Activated naive CD4-positive, alpha-beta T cell treated with anti-CD3 and anti-CD28 coated beads for 36 hours (primary cell): ENCODE measurements at regions of chr12 and their contacts with region 1.

Region 1: GRCh38 chr12:110600254-110600653 is 13.7 kb upstream of the TCTN1 start:
- DNase-seq: no peak
- H3K4me3 Mint-ChIP-seq: no peak overlapping the region
- H3K27ac Mint-ChIP-seq: no peak overlapping the region
- H3K4me1 Mint-ChIP-seq: peaks cover 6% of the 10 kb centered on the region
- H3K27me3 Mint-ChIP-seq: no peaks in the 10 kb centered on the region

Region 2: DNA sequence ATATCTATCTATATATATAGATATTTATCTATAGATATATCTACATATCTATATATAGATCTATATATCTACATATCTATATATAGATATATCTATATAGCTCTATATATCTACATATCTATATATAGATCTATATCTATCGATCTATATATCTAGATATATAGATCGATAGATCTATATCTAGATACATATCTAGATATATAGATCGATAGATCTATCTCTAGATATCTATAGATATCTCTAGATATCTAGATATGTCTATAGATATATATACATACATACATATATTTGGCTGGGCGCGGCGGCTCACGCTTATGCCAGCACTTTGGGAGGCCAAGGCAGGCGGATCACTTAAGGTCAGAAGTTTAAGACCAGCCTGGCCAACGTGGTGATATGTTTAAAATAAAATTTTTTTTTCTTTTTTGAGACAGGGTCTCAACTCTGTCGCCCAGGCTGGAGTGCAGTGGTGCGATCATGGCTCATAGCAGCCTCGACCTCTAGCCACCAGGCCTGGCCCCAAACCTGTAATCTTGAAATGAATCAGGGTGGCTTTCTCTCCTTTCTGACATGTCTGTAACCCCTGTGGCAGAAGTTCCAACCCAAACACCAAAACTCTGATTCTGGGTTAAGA is 168.2 kb before region 1 on chr12:
- CTCF ChIA-PET with region 1: interaction called, 16 read pairs
- intact Hi-C with region 1: no loop called
- DNase-seq: peak; percentile 31
- H3K4me3 Mint-ChIP-seq: no peak overlapping the region
- H3K27ac Mint-ChIP-seq: peak overlapping the region; percentile 36
- H3K4me1 Mint-ChIP-seq: peaks cover 3% of the 10 kb centered on the region
- H3K27me3 Mint-ChIP-seq: no peaks in the 10 kb centered on the region

Region 3: DNA sequence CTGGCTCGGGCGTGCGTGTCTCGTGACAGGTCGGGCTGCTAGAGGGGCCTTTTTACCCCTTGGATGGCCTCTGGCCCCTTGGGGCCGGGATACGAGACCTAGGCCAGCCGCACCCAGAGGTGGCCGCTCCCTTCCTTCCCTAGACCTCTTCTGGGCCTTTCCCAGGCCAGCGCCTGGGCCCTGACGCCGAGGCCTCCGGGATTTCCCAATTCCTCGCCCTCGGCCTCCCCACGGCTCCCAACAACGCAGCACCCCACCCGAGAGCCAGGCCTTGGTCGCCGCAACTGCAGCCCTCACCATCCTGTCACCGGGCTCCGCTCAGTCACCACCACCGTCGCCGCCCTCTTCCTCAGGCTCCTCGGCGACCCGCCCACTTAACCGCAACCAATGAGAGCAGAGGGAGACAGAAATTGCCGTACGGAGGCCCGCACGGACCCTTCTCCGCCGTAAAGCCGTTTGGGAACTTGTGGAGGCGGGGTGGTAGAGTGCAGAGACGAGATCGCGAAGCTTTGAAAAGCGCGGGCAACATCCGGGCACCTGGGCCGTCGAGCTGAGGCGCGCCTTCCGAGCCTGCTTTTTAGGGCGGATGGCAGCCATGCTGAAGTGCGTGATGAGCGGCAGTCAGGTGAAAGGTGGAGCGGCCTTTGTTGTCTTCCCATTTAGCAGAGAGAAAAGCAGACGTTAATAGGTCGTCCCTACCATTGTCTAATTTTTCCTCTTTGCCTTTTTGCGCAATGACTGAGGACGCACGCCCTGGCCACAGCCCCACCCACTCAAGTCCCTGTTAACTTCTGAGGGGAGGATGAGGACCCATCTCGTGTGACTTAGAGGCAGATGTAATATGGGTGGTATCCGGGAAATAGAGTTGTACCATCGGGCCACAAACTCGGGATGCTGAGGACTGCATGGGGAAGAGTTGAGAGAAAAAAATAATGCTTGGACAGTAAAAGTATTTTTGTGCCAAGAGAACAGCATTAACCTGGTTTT is 98.2 kb before region 1 on chr12 and contains the starts of genes RAD9B and VPS29:
- CTCF ChIA-PET with region 1: interaction called, 199 read pairs
- intact Hi-C with region 1: no loop called
- DNase-seq: peak; percentile 100
- H3K4me3 Mint-ChIP-seq: peak within 1 kb of the TSS; percentile 94
- H3K27ac Mint-ChIP-seq: peak within 1 kb of the TSS; percentile 96
- H3K4me1 Mint-ChIP-seq: peaks cover 32% of the 10 kb centered on the region
- H3K27me3 Mint-ChIP-seq: no peaks in the 10 kb centered on the region
- total RNA-seq, gene RAD9B: 1.1 to 1.5 TPM
- total RNA-seq, gene VPS29: 76.6 to 81.8 TPM

Region 4: DNA sequence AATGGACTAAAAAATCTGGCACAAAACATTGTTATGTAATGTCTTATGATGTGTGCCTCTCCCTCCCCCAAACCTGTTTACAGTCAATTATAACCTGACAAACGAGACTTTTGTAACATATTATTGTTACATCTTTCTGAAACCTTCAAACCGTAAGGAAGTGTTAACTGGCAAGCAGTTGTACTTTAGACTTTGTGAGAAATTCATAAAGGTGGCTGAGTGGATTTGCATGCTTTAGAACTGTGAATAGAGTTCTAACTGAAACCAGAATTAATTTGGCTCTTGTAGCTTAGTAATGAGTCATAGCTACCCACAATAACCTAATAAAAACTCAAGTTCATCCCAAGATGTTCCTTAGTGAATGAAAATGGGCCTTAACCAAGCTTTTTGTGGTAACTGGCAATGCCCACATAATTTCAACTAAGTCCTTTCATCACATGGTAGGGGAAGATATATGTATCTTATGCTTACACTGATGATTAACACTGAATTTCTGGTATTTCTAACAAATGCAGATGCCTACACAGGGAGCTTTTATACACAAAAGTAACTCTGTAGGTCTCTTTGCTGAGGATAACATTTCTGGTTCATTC is 68.4 kb before region 1 on chr12:
- CTCF ChIA-PET with region 1: interaction called, 82 read pairs
- intact Hi-C with region 1: no loop called
- DNase-seq: no peak
- H3K4me3 Mint-ChIP-seq: no peak overlapping the region
- H3K27ac Mint-ChIP-seq: peak overlapping the region; percentile 37
- H3K4me1 Mint-ChIP-seq: peaks cover 28% of the 10 kb centered on the region
- H3K27me3 Mint-ChIP-seq: no peaks in the 10 kb centered on the region

Region 5: DNA sequence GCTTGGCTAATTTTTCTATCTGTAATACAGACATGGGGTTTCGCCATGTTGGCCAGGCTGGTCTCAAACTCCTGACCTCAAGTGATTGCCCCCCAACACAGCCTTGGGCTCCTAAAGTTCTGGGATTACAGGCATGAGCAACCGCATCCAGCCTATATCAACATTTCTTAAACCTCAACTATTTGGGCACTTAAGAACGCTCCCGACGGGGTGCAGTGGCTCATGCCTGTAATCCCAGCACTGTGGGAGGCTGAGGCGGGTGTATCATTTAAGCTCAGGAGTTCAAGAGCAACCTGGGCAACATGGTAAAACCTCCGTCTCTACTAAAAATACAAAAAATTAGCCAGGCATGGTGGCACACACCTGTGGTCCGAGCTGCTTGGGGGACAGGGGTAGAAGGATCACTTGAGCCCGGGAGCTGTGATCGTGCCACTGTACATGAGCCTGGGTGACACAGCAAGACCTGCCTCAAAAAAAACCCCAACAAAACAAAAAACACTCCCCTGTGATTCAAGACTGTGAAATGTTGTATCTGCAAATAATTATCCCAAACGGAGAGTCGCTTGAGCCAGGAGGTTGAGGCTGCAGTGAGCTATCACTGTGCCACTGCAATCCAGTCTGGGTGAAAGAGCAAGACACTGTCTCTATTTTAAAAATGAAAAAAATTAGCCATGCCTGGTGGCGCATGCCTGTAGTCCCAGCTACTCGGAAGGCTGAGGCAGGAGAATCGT is 38.6 kb before region 1 on chr12:
- CTCF ChIA-PET with region 1: interaction called, 12 read pairs
- intact Hi-C with region 1: no loop called
- DNase-seq: no peak
- H3K4me3 Mint-ChIP-seq: peak overlapping the region; percentile 41
- H3K27ac Mint-ChIP-seq: peak overlapping the region; percentile 85
- H3K4me1 Mint-ChIP-seq: peaks cover 84% of the 10 kb centered on the region
- H3K27me3 Mint-ChIP-seq: no peaks in the 10 kb centered on the region

Region 6: GRCh38 chr12:110613771-110614684 is 13.8 kb after region 1 on chr12 and contains the start of gene TCTN1:
- CTCF ChIA-PET with region 1: interaction called, 53 read pairs
- intact Hi-C with region 1: no loop called
- DNase-seq: peak; percentile 98
- H3K4me3 Mint-ChIP-seq: peak within 1 kb of the TSS; percentile 84
- H3K27ac Mint-ChIP-seq: peak within 1 kb of the TSS; percentile 84
- H3K4me1 Mint-ChIP-seq: peaks cover 13% of the 10 kb centered on the region
- H3K27me3 Mint-ChIP-seq: no peaks in the 10 kb centered on the region
- total RNA-seq, gene TCTN1: 5.2 to 5.8 TPM

Region 7: DNA sequence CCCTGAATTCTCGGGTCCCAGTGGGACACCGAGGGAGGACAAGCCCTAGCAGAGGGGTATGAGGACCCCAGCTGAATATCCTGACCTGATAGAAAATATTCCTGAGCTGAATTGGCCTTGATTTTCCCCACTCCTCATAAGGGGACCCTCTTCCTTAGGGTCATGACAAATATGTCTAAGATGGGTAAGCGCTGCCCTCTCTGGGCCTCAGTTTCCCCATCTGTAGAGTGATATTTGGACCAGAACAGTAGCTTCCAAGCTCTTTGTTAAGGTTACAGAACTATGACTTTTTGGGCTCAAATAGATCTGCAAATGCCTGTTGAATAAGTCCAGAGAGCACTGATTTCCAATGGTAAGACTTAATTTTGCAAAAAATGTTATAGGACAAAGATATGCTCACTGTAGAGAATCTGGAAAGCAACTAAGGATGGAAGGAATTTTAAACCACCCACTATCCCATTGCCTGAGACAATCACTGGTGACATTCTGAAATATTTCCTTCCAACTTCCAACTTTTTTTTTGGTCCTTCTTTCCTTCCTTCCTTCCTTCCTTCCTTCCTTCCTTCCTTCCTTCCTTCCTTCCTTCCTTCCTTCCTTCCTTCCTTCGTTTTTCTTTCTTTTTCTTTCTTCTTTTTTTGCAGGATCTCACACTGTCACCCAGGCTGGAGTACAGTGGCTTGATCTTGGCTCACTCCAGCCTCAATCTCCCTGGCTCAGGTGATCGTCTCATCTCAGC is 288.2 kb after region 1 on chr12:
- CTCF ChIA-PET with region 1: interaction called, 6 read pairs
- intact Hi-C with region 1: loop called (anchors 1 kb)
- DNase-seq: no peak
- H3K4me3 Mint-ChIP-seq: no peak overlapping the region
- H3K27ac Mint-ChIP-seq: no peak overlapping the region
- H3K4me1 Mint-ChIP-seq: peaks cover 8% of the 10 kb centered on the region
- H3K27me3 Mint-ChIP-seq: no peaks in the 10 kb centered on the region

Region 8: GRCh38 chr12:111024205-111024801 is 424.0 kb after region 1 on chr12:
- CTCF ChIA-PET with region 1: no interaction called
- intact Hi-C with region 1: no loop called
- DNase-seq: peak; percentile 68
- H3K4me3 Mint-ChIP-seq: no peak overlapping the region
- H3K27ac Mint-ChIP-seq: no peak overlapping the region
- H3K4me1 Mint-ChIP-seq: no peaks in the 10 kb centered on the region
- H3K27me3 Mint-ChIP-seq: peaks cover 3% of the 10 kb centered on the region